B cell (primary cell): ENCODE measurements at regions of chr10 and their contacts with region 1.

Region 1: GRCh38 chr10:60513281-60513680 is 123.6 kb upstream of the ANK3 start:
- DNase-seq: peak; percentile 55
- ATAC-seq: peak; percentile 58
- H3K4me3 ChIP-seq: no peak overlapping the region
- H3K4me3 Mint-ChIP-seq: no peak overlapping the region
- H3K27ac ChIP-seq: no peak overlapping the region
- H3K27ac Mint-ChIP-seq: no peak overlapping the region
- H3K4me1 ChIP-seq: peaks cover 7 to 8% of the 10 kb centered on the region in 2 donors
- H3K4me1 Mint-ChIP-seq: peaks cover 18% of the 10 kb centered on the region
- H3K27me3 ChIP-seq: no peaks in the 10 kb centered on the region
- H3K27me3 Mint-ChIP-seq: peaks cover 2% of the 10 kb centered on the region
- CTCF ChIP-seq: no peak

Region 2: GRCh38 chr10:60439641-60440040 is 73.6 kb before region 1 on chr10:
- CTCF ChIA-PET with region 1: no interaction called
- POLR2A ChIA-PET with region 1: no interaction called
- intact Hi-C with region 1: no loop called
- DNase-seq: no peak
- ATAC-seq: no peak
- H3K4me3 ChIP-seq: no peak overlapping the region
- H3K4me3 Mint-ChIP-seq: no peak overlapping the region
- H3K27ac ChIP-seq: no peak overlapping the region
- H3K27ac Mint-ChIP-seq: no peak overlapping the region
- H3K4me1 ChIP-seq: no peaks in the 10 kb centered on the region
- H3K4me1 Mint-ChIP-seq: no peaks in the 10 kb centered on the region
- H3K27me3 ChIP-seq: no peaks in the 10 kb centered on the region
- H3K27me3 Mint-ChIP-seq: no peaks in the 10 kb centered on the region
- CTCF ChIP-seq: no peak

Region 3: GRCh38 chr10:60456053-60456452 is 57.2 kb before region 1 on chr10:
- CTCF ChIA-PET with region 1: no interaction called
- POLR2A ChIA-PET with region 1: no interaction called
- intact Hi-C with region 1: loop called (anchors 10 kb)
- DNase-seq: no peak
- ATAC-seq: no peak
- H3K4me3 ChIP-seq: no peak overlapping the region
- H3K4me3 Mint-ChIP-seq: no peak overlapping the region
- H3K27ac ChIP-seq: no peak overlapping the region
- H3K27ac Mint-ChIP-seq: no peak overlapping the region
- H3K4me1 ChIP-seq: peaks cover 0 to 4% of the 10 kb centered on the region in 2 donors
- H3K4me1 Mint-ChIP-seq: peaks cover 15% of the 10 kb centered on the region
- H3K27me3 ChIP-seq: no peaks in the 10 kb centered on the region
- H3K27me3 Mint-ChIP-seq: no peaks in the 10 kb centered on the region
- CTCF ChIP-seq: no peak